Heart right ventricle (tissue), 16 donors: ENCODE measurements at regions of chr3 and their contacts with region 1.

Region 1: GRCh38 chr3:11878840-11879239 is 32.2 kb upstream of the TAMM41 start:
- DNase-seq: no peak
- ATAC-seq: no peak
- H3K4me3 ChIP-seq: no peak overlapping the region
- H3K27ac ChIP-seq: no peak overlapping the region
- H3K4me1 ChIP-seq: no peaks in the 10 kb centered on the region
- H3K27me3 ChIP-seq: peaks cover 0 to 37% (median 0%) of the 10 kb centered on the region in 7 donors
- CTCF ChIP-seq: no peak

Region 2: DNA sequence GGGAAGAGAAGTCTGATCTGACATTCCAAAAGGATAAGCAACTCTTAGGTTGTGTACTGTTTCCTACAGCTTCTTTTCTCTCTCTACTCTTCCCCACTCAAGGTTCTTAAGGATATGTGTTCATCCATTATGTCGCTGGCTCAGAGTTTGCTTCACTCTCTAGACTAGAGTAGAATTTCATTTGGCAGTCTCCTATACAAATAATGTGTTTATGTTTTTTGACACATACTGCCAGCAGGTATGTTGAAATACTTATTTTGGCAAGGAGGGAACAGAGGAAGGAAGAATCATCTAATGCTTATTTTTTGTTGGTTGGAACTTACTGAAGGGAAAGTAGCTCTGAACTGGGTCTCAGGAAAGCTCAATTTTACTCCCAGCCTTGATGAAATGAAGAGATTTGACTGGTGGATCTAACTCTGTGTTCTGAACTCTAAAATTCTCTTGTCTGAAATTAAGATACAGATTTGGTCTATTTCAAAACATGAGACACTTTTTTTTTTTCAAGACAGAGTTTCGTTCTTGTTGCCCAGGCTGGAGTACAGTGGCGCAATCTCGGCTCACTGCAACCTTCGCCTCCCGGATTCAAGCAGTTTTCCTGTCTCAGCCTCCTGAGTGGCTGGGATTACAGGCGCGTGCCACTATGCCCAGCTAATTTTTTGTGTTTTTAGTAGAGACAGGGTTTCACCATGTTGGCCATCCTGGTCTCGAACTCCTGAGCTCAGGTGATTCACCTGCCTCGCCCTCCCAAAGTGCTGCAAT is 1884.6 kb before region 1 on chr3:
- intact Hi-C with region 1: loop called in 1 of 10 experiments (anchors 10 kb)
- DNase-seq: no peak
- ATAC-seq: no peak
- H3K4me3 ChIP-seq: no peak overlapping the region
- H3K27ac ChIP-seq: no peak overlapping the region
- H3K4me1 ChIP-seq: peaks cover 0 to 7% (median 0%) of the 10 kb centered on the region in 9 donors
- H3K27me3 ChIP-seq: no peaks in the 10 kb centered on the region
- CTCF ChIP-seq: no peak

Region 3: GRCh38 chr3:10041034-10041433 is 1837.8 kb before region 1 on chr3:
- intact Hi-C with region 1: loop called in 1 of 10 experiments (anchors 10 kb)
- DNase-seq: no peak
- ATAC-seq: no peak
- H3K4me3 ChIP-seq: no peak overlapping the region
- H3K27ac ChIP-seq: no peak overlapping the region
- H3K4me1 ChIP-seq: no peaks in the 10 kb centered on the region
- H3K27me3 ChIP-seq: no peaks in the 10 kb centered on the region
- CTCF ChIP-seq: no peak